Prostate gland (tissue), 2 donors: ENCODE measurements at regions of chr5 and their contacts with region 1.

Region 1: DNA sequence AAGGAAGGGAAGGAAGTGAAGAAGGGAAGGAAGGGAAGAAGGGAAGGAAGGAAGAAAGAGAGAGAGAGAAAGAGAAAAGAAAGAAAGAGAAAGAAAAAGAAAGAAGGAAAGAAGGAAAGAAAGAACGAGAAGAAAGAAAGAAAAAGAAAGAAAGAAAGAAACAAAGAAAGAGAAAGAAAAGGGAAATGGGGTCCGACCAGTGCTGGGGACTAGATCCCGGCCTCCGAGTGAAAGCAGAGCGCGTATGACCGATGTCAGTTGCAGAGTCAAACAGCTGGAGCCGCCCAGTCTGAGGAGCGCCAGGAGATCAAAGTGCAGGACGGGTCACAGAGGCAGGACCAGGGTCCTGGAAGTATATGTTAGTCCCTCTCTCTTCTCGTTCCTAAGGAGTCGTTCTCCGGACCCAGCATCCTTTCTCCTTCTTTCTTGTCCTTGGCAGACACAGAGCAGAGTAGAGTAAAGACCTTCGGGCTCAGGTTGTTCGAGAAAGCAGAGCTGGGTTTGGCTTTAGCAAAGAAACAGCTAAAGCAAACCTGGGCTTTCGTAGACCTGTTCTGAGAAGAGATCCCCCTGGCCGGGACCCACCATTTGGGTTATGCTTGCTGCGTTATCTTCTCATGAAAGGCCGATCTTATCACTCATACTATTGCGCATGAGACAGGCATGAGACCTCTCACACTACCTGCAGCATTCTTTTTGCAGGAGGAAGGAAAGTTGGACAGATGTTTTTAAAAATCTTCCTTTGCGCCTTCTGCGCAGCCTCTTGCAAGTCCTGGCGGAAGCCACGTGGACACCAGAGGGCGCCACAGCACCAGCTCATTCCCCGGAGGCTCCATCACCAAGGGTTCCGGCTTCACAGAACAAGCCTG is 305.2 kb upstream of the MSX2 start:
- DNase-seq: peak; percentile 92
- H3K4me3 ChIP-seq: no peak overlapping the region
- H3K27ac ChIP-seq: no peak overlapping the region
- H3K4me1 ChIP-seq: no peaks in the 10 kb centered on the region
- H3K27me3 ChIP-seq: peaks cover 3% of the 10 kb centered on the region
- CTCF ChIP-seq: peak; percentile 74 to 92 (median 92)
- POLR2A ChIP-seq: no peak

Region 2: DNA sequence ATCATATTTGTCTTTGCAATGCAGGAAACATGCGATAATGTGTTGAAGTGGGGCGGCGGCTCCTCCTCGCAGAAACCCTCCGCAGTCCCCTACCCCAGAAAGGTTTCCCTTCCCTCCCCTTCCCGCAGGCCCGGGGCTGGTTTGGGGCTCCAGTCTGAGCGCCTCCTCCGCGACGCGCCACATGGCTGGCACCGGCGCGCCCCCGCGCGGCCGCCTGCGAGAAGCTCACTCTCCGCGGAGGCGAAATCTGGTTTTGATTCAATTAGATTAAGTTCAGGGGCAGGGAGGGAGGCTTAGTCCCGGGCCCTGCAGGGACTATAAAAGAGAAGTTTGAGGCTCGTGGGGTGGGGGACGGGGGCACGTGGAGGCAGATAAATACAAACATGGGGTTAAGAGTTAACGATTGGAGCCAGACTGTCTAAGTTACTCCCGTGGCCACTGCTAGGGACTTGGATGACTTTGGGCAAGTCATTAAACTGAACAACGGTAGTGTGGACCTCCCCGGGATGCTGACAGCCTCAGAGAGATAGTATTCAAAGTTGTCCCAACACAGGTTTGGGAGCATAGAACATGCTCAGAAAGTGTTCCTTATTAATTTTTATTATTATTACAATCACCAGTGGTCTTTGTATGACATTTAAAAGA is 374.6 kb after region 1 on chr5:
- intact Hi-C with region 1: loop called (anchors 1 kb)
- DNase-seq: peak; percentile 35
- H3K4me3 ChIP-seq: no peak overlapping the region
- H3K27ac ChIP-seq: no peak overlapping the region
- H3K4me1 ChIP-seq: no peaks in the 10 kb centered on the region
- H3K27me3 ChIP-seq: no peaks in the 10 kb centered on the region
- CTCF ChIP-seq: peak; percentile 57 to 81 (median 71)
- POLR2A ChIP-seq: no peak

Region 3: GRCh38 chr5:174935854-174936474 is 516.8 kb after region 1 on chr5:
- intact Hi-C with region 1: loop called (anchors 2 kb)
- DNase-seq: peak; percentile 30
- H3K4me3 ChIP-seq: no peak overlapping the region
- H3K27ac ChIP-seq: no peak overlapping the region
- H3K4me1 ChIP-seq: no peaks in the 10 kb centered on the region
- H3K27me3 ChIP-seq: no peaks in the 10 kb centered on the region
- CTCF ChIP-seq: peak; percentile 61 to 78 (median 71)
- POLR2A ChIP-seq: no peak

Region 4: DNA sequence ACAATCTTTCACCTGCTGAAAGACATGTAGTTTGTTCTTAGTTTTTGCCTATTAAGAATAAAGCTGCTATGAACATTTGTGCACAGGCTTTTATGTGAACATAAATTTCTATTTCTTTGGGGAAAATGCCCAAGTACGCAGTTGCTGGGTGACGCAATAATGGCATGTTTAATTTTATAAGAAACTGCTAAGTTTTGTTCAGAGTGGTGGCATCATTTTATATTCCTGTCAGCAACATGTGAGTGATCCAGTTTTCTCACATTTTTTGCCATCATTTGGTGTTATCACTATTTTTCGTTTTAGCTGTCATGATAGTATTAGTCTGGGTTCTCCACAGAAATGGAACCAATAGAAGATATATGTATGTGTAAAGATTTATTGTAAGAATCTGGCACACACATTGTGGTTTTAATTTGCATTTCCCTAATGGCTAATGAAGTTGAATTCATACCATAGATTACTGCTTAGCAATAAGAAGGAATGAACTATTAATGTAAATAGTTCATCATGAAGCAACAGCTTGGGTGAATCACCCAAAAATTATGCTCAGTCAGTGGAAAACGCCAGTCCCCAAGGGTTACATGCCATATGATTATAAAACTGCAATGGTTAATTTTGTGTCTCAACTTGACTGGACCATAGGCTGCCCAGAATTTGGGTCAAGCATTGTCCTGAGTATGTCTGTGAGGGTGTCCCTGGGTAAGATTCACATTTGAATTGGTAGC is 663.9 kb after region 1 on chr5:
- intact Hi-C with region 1: no loop called
- DNase-seq: no peak
- H3K4me3 ChIP-seq: no peak overlapping the region
- H3K27ac ChIP-seq: no peak overlapping the region
- H3K4me1 ChIP-seq: no peaks in the 10 kb centered on the region
- H3K27me3 ChIP-seq: no peaks in the 10 kb centered on the region
- CTCF ChIP-seq: no peak
- POLR2A ChIP-seq: no peak